ENCODE measurements at regions of chr11 and their contacts with region 1.

Region 1: GRCh38 chr11:62905927-62906531 is 15.1 kb downstream of the CHRM1 start:
- DNase-seq: peak; percentile 79 to 88
- H3K4me3 ChIP-seq: no peak overlapping the region
- H3K27ac ChIP-seq: no peak overlapping the region
- H3K4me1 ChIP-seq: peaks cover 0 to 19% (median 15%) of the 10 kb centered on the region in 4 donors
- H3K27me3 ChIP-seq: no peaks in the 10 kb centered on the region
- CTCF ChIP-seq: peak; percentile 96 to 99

Region 2: GRCh38 chr11:62841361-62842184 is 64.5 kb before region 1 on chr11:
- intact Hi-C with region 1: no loop called
- DNase-seq: peak; percentile 88 to 92
- H3K4me3 ChIP-seq: peak overlapping the region; percentile 66 to 84
- H3K27ac ChIP-seq: peak overlapping the region; percentile 91 to 95
- H3K4me1 ChIP-seq: peaks cover 0 to 33% (median 15%) of the 10 kb centered on the region in 4 donors
- H3K27me3 ChIP-seq: no peaks in the 10 kb centered on the region
- CTCF ChIP-seq: peak in 1 of 2 experiments; percentile 37

Region 3: GRCh38 chr11:62922658-62923431 is 16.8 kb after region 1 on chr11:
- intact Hi-C with region 1: no loop called
- DNase-seq: no peak
- H3K4me3 ChIP-seq: no peak overlapping the region
- H3K27ac ChIP-seq: no peak overlapping the region
- H3K4me1 ChIP-seq: peaks cover 0 to 50% (median 42%) of the 10 kb centered on the region in 4 donors
- H3K27me3 ChIP-seq: peaks cover 0 to 67% of the 10 kb centered on the region in 2 donors
- CTCF ChIP-seq: no peak

Region 4: GRCh38 chr11:63023841-63024648 is 118.0 kb after region 1 on chr11:
- intact Hi-C with region 1: loop called (anchors 2 kb)
- DNase-seq: peak; percentile 88 to 93
- H3K4me3 ChIP-seq: no peak overlapping the region
- H3K27ac ChIP-seq: no peak overlapping the region
- H3K4me1 ChIP-seq: no peaks in the 10 kb centered on the region
- H3K27me3 ChIP-seq: no peaks in the 10 kb centered on the region
- CTCF ChIP-seq: peak; percentile 99

Region 5: DNA sequence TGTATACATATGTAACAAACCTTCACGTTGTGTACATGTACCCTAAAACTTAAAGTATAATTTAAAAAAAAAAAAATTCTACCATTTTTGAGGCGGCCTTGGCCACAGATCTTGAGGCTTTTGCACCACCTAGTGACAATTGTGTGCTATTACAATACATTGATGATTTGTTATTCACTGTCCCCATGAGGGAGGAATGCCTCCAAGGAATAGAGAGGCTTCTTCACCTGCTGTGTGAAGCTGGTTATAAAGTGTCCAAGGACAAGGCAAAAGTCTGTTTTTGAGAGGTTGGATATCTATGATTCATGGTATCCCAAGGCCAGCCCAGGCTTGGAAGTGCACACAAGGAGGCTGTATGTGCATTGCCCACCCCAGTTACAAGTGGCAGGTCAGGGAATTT is 306.7 kb after region 1 on chr11:
- intact Hi-C with region 1: loop called (anchors 10 kb)
- DNase-seq: no peak
- H3K4me3 ChIP-seq: no peak overlapping the region
- H3K27ac ChIP-seq: no peak overlapping the region
- H3K4me1 ChIP-seq: no peaks in the 10 kb centered on the region
- H3K27me3 ChIP-seq: no peaks in the 10 kb centered on the region
- CTCF ChIP-seq: peak; percentile 30 to 39